Dendritic cell treated with granulocyte-macrophage colony-stimulating factor and Interleukin-4, amounts not matched to agents 40 ng/mL and 50 ng/mL, for 4 days (primary cell): ENCODE measurements at regions of chr15 and their contacts with region 1.

Region 1: GRCh38 chr15:38440353-38441129 is 13.4 kb upstream of the FAM98B start:
- H3K4me3 Mint-ChIP-seq: no peak overlapping the region
- H3K27ac Mint-ChIP-seq: no peak overlapping the region
- H3K4me1 Mint-ChIP-seq: peaks cover 19% of the 10 kb centered on the region
- H3K27me3 Mint-ChIP-seq: no peaks in the 10 kb centered on the region

Region 2: GRCh38 chr15:38389924-38390542 is 50.5 kb before region 1 on chr15:
- intact Hi-C with region 1: no loop called
- H3K4me3 Mint-ChIP-seq: no peak overlapping the region
- H3K27ac Mint-ChIP-seq: peak overlapping the region; percentile 68
- H3K4me1 Mint-ChIP-seq: peaks cover 10% of the 10 kb centered on the region
- H3K27me3 Mint-ChIP-seq: peaks cover 5% of the 10 kb centered on the region

Region 3: DNA sequence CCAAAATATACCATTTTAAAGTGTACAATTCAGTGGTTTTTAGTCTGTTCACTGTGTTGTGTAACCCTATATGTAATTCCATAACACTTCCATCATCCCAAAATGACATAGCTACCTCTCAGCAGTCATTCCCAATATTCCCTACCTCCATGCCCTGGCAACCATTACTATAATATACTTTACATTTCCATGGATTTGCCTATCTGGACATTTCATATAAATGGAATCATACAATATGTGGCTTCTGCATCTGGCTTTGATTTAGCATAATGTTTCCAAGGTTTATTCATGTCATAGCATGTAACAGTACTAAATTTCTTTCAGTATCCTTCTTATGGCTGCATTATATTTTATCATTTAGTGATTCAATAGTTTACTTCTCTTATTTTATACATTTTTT is 38.7 kb after region 1 on chr15:
- intact Hi-C with region 1: loop called (anchors 5 kb)
- H3K4me3 Mint-ChIP-seq: no peak overlapping the region
- H3K27ac Mint-ChIP-seq: no peak overlapping the region
- H3K4me1 Mint-ChIP-seq: peaks cover 14% of the 10 kb centered on the region
- H3K27me3 Mint-ChIP-seq: no peaks in the 10 kb centered on the region

Region 4: DNA sequence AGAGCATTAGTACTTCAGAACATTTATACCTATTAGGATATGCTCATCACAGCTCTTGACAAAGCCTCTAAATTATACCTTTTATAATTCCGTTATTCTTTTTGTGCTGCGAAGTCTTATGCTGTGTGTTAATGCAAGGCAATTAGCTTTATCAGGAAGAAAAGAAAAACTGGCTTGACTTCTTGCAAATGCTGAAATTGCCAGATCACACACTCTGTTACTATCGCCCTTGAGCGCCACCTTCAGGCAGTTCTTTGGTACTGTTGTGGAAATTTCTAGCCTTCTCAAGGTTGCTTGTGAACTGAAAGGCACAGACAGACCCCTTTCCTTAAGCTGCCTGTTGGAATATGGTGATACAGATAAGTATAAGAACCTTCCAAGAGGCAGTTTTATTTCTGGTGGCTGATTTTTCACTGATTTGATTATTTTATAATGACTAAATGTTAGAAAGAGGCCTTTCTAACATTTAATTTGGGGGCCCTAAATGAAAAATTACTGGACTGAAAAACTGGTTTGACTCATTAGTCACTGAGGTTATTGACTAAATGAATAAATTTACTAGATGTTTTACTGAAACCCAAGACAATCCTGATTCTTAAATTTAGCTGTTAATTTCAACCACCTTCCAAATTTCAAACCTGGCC is 250.3 kb after region 1 on chr15:
- intact Hi-C with region 1: loop called (anchors 2 kb)
- H3K4me3 Mint-ChIP-seq: no peak overlapping the region
- H3K27ac Mint-ChIP-seq: no peak overlapping the region
- H3K4me1 Mint-ChIP-seq: peaks cover 16% of the 10 kb centered on the region
- H3K27me3 Mint-ChIP-seq: no peaks in the 10 kb centered on the region

Region 5: DNA sequence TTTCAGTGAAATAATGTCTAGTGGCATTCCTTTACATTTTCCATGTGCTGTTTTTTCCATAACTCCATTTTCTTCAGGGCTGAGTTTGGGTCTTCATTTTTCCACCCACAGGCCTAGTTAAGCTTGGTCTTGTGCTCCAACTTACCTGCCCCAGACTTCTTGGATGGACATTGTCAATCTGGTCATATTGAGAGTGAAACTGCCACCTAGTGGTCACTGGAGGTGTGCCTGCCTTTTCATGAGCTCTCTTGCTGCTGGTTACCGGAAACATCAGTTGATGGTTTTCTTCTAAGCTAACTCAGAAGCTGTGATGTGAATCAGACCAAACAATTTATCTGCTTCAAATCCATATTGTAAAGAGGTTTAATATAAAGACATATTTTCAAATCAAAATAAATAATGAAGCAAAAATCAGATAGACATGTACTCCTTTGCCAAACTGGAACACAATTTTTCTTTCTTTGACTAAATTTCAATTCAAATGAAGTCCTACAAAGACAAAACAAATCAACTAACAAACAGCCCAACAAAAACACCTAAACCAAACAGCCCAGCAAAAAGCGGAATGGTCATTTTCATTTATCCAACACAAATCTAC is 259.2 kb after region 1 on chr15:
- intact Hi-C with region 1: loop called (anchors 1 kb)
- H3K4me3 Mint-ChIP-seq: no peak overlapping the region
- H3K27ac Mint-ChIP-seq: no peak overlapping the region
- H3K4me1 Mint-ChIP-seq: no peaks in the 10 kb centered on the region
- H3K27me3 Mint-ChIP-seq: no peaks in the 10 kb centered on the region